Mammary epithelial cell (primary cell): ENCODE measurements at regions of chr6 and their contacts with region 1.

Region 1: DNA sequence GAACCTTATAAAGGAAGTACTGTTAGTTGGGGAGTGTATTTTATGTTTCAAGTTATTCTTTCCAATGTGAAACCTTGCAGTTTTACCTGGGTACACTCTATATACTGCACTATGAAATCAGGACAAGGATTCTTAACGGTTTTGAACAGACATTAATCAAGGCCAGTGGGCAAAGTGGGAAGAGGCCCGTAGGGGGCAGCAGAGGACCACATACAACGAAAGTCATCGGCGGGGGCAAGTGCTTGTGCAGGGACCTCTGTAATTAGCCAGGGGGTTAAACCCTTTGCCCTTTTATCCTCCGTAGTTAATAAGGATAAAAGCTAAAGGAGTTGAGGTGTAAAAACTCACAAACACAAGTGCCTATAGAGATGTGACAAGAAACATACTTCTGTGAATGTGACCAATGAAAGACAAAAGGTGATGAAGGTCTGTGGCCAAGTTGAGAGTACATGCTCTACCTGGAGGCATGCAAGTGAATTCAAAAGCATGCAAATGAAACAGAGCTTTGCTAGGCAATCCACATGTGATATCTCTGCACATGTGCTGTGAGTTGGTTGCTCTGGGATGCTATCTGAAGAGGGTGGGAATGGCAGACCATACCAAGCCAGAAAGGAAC is 392.7 kb upstream of the MAN1A1 start:
- DNase-seq: peak; percentile 33
- H3K4me3 ChIP-seq: no peak overlapping the region
- H3K27ac ChIP-seq: no peak overlapping the region
- H3K4me1 ChIP-seq: no peaks in the 10 kb centered on the region
- H3K27me3 ChIP-seq: peaks cover 2% of the 10 kb centered on the region
- CTCF ChIP-seq: peak; percentile 81 to 96

Region 2: DNA sequence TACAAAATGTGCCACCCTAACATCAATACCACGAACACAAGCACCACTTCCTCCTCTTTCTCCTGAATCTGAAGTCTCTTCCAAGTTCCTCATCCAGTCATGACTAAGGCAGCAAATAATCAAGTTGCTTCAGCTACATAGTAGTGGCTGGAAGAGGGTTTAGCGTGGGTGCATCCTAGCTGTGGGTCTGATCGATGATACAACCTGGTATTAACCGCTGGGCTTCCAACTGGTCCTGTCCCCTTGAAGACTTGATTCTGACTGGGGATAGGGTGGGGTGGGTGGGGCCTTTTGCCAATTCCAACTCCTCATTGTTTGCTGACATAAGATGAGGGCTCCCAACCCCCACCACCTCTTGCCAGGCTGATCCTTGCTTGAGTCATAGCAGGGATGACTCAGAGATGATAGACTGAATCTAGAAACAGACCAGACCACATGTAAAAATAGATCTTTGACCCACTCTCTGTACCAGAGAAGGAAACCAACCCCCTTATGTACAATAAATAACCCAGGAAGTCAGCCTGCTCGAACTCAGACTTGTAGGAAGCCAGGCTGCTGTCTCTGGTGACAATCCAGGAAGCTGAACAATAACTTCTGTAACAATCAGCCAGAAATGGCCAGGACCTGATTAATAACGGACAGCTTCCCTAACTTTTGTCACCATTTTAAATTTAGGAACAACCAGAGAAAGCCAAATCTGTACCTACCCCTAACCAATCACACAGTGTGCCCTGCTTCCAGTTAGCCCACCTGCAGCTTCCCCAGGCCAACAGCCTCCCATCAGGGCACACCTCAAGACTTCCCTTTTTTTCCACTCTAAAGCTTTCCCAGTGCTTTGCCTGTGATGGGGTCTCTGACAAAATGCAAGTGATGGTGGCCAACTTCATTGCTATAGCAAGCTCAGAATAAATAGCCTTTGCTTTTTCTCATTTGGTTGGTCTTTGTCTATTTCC is 594.9 kb before region 1 on chr6:
- CTCF ChIA-PET with region 1: no interaction called
- dilution Hi-C with region 1: no loop called
- in situ Hi-C with region 1: loop called in 1 of 2 experiments (anchors 25 kb)
- intact Hi-C with region 1: loop called (anchors 2 kb)
- DNase-seq: peak; percentile 93
- H3K4me3 ChIP-seq: no peak overlapping the region
- H3K27ac ChIP-seq: peak overlapping the region; percentile 54
- H3K4me1 ChIP-seq: peaks cover 24% of the 10 kb centered on the region
- H3K27me3 ChIP-seq: no peaks in the 10 kb centered on the region
- CTCF ChIP-seq: no peak

Region 3: GRCh38 chr6:119830494-119831295 is 88.4 kb after region 1 on chr6:
- CTCF ChIA-PET with region 1: no interaction called
- dilution Hi-C with region 1: no loop called
- in situ Hi-C with region 1: no loop called
- intact Hi-C with region 1: no loop called
- DNase-seq: peak; percentile 97
- H3K4me3 ChIP-seq: no peak overlapping the region
- H3K27ac ChIP-seq: peak overlapping the region; percentile 91
- H3K4me1 ChIP-seq: peaks cover 40% of the 10 kb centered on the region
- H3K27me3 ChIP-seq: no peaks in the 10 kb centered on the region
- CTCF ChIP-seq: no peak

Region 4: DNA sequence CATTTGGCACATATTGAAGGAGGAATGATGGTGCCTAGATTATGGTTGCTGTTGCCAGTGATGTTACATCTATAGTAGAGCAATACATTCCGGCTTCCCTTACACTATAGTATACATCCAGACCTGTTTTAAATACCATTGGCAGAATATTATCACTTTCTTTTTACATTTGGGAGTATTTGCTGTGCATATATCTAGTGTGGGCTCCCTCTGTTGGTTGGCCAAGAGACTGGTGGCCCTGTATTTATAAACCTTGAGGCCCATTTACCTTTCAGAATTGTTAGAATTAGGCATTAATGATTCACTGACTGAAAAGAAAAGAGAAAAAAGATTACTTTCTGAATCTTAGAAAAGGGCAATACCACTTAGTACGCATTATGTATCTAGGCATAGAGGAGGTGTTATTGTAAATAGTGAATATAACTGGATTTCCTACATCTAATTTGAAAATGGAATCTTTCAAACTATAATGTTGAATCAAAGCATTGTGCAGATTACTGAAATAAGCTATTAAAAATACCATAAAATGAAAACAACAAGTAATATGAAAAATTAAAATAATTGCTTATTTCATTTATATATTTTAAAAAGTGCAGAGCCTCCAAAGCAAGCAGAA is 236.1 kb after region 1 on chr6:
- CTCF ChIA-PET with region 1: no interaction called
- dilution Hi-C with region 1: no loop called
- in situ Hi-C with region 1: no loop called
- intact Hi-C with region 1: loop called (anchors 1 kb)
- DNase-seq: peak; percentile 17
- H3K4me3 ChIP-seq: no peak overlapping the region
- H3K27ac ChIP-seq: no peak overlapping the region
- H3K4me1 ChIP-seq: no peaks in the 10 kb centered on the region
- H3K27me3 ChIP-seq: no peaks in the 10 kb centered on the region
- CTCF ChIP-seq: peak; percentile 57 to 77

Region 5: GRCh38 chr6:120378582-120379220 is 636.4 kb after region 1 on chr6:
- CTCF ChIA-PET with region 1: no interaction called
- dilution Hi-C with region 1: no loop called
- in situ Hi-C with region 1: no loop called
- intact Hi-C with region 1: loop called (anchors 1 kb)
- DNase-seq: peak; percentile 40
- H3K4me3 ChIP-seq: no peak overlapping the region
- H3K27ac ChIP-seq: no peak overlapping the region
- H3K4me1 ChIP-seq: no peaks in the 10 kb centered on the region
- H3K27me3 ChIP-seq: no peaks in the 10 kb centered on the region
- CTCF ChIP-seq: peak; percentile 79 to 83

Region 6: DNA sequence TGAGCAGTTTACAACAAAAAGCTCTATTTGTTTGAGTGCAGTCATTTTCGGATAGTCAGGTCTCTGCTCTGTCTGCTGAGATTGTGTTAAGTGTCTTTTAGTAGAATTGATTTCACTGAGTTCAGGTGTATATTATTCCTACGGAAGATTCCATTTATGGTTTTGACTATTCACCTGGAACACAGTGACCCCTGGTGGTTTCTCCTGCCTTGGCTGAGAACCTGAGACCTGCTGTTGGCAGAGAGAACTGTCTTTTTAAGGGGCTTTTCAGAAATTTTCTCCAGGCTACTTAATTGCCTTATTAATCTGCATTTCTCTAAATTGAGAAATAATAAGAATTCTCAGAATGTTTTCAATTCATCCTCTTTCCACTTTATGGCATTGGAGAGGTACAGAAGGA is 1084.0 kb after region 1 on chr6:
- CTCF ChIA-PET with region 1: no interaction called
- dilution Hi-C with region 1: no loop called
- in situ Hi-C with region 1: no loop called
- intact Hi-C with region 1: loop called (anchors 5 kb)
- DNase-seq: peak; percentile 9
- H3K4me3 ChIP-seq: no peak overlapping the region
- H3K27ac ChIP-seq: no peak overlapping the region
- H3K4me1 ChIP-seq: no peaks in the 10 kb centered on the region
- H3K27me3 ChIP-seq: no peaks in the 10 kb centered on the region
- CTCF ChIP-seq: peak; percentile 77 to 84